HepG2 (cell line): ENCODE measurements at regions of chr5 and their contacts with region 1.

Region 1: DNA sequence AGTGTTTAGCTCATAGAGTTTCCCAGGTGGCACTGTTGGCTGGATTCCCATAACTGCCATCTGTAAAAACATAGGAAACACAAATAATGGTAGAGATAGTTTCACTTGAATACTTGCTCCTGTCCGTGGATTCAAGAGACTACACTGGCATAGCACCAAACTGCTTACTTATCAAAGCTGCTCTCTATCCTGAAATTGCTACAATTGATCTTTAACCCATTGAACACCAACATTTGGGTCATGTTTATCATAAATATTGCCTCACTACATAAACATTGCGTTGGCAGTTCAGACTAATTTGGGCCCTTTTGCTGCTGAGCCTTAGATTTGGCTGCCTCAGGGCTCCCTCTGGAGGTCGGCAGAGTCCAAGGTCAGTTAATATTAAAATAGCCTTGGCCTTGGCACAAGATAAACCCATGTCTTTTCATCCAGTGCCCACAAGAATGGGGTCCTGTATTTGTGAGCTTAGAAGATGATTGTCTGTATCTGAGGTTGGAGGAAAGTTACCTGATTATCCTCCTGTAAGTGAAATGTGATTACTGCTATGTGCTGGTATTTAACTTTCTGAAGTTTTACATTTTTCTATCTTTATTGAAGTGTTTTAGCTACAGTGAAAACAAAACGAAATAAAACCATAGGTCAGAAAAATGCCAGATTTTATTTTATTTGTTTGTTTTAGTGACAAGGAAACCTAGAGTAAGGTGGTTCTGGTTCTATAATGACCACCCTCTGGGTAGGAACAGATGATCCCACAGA is 4.0 kb upstream of the RANBP3L start:
- DNase-seq: peak; percentile 28
- ATAC-seq: peak; percentile 75
- H3K4me3 ChIP-seq: no peak overlapping the region
- H3K27ac ChIP-seq: no peak overlapping the region
- H3K4me1 ChIP-seq: peaks cover 11% of the 10 kb centered on the region
- H3K27me3 ChIP-seq: no peaks in the 10 kb centered on the region
- CTCF ChIP-seq: peak; percentile 69
- EP300 ChIP-seq: no peak
- POLR2A ChIP-seq: no peak
- RAD21 ChIP-seq: no peak

Region 2: GRCh38 chr5:36079200-36079761 is 226.5 kb before region 1 on chr5:
- CTCF ChIA-PET with region 1: interaction called, 3 read pairs
- POLR2A ChIA-PET with region 1: no interaction called
- in situ Hi-C with region 1: no loop called
- intact Hi-C with region 1: loop called (anchors 5 kb)
- DNase-seq: peak; percentile 55
- ATAC-seq: peak; percentile 99
- H3K4me3 ChIP-seq: peak overlapping the region in 1 of 3 experiments; percentile 38; a peak in 1 of 6 replicates
- H3K27ac ChIP-seq: no peak overlapping the region
- H3K4me1 ChIP-seq: no peaks in the 10 kb centered on the region
- H3K27me3 ChIP-seq: no peaks in the 10 kb centered on the region
- CTCF ChIP-seq: peak; percentile 85
- EP300 ChIP-seq: no peak
- POLR2A ChIP-seq: no peak
- RAD21 ChIP-seq: peak; percentile 31; the same call in 1 of the 2 replicates

Region 3: DNA sequence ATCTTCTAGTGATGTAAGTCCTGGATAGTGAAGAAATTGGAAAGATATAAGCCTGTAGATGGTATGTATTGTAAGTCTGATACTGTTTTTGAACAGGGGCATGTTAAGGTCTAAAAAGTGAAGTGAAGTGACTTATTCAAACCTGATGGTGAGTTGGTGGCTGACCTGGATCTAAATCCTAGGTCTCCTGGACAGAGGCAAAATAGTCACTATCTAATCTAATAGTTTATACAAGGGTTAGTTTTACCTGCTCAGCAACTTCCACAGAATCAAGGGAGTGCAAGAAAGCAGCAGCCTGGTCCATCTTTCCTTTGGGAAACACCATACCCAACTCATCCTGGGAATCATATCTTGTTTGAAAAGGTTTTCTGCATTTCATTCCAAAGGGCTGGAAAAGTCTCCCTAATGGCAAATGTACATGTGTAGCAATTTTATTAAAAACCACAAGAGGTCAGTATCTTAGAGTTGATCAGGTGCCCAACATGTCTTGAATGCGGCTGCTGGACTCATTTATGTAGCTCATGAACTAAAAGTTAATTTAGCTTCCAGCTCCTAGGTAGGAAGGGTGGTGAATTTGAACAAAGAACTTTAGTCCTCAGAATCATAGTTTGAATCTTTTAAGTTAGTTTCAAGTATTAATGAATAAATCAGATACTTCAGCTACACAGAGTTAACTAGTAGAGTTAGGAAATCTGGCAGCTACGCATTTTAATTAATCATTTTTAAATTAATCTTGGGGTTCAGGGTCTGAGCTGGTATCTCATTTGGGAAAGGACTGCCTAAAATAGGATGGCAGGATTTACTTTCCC is 127.8 kb before region 1 on chr5:
- CTCF ChIA-PET with region 1: interaction called, 10 read pairs
- POLR2A ChIA-PET with region 1: no interaction called
- in situ Hi-C with region 1: no loop called
- intact Hi-C with region 1: loop called (anchors 1 kb)
- DNase-seq: peak; percentile 48
- ATAC-seq: peak; percentile 45; the same call in 2 of the 3 replicates
- H3K4me3 ChIP-seq: no peak overlapping the region
- H3K27ac ChIP-seq: peak overlapping the region; percentile 23
- H3K4me1 ChIP-seq: peaks cover 60% of the 10 kb centered on the region
- H3K27me3 ChIP-seq: no peaks in the 10 kb centered on the region
- CTCF ChIP-seq: peak; percentile 71
- EP300 ChIP-seq: no peak
- POLR2A ChIP-seq: no peak
- RAD21 ChIP-seq: 0 out of 2 replicates have a peak, but pooled peaks have one; percentile 35

Region 4: GRCh38 chr5:36270220-36270574 is 35.6 kb before region 1 on chr5:
- CTCF ChIA-PET with region 1: interaction called, 8 read pairs
- POLR2A ChIA-PET with region 1: no interaction called
- in situ Hi-C with region 1: no loop called
- intact Hi-C with region 1: loop called (anchors 1 kb)
- DNase-seq: no peak
- ATAC-seq: no peak
- H3K4me3 ChIP-seq: no peak overlapping the region
- H3K27ac ChIP-seq: no peak overlapping the region
- H3K4me1 ChIP-seq: no peaks in the 10 kb centered on the region
- H3K27me3 ChIP-seq: no peaks in the 10 kb centered on the region; a peak in 1 of 5 replicates
- CTCF ChIP-seq: no peak
- EP300 ChIP-seq: no peak
- POLR2A ChIP-seq: no peak
- RAD21 ChIP-seq: no peak